Thyroid gland (tissue), 4 donors: ENCODE measurements at regions of chr20 and their contacts with region 1.

Region 1: GRCh38 chr20:31822421-31823330 is 3.5 kb downstream of the MYLK2 start:
- DNase-seq: peak; percentile 98
- H3K4me3 ChIP-seq: no peak overlapping the region
- H3K27ac ChIP-seq: peak overlapping the region; percentile 17 to 64 (median 56)
- H3K4me1 ChIP-seq: peaks cover 28 to 38% of the 10 kb centered on the region in 2 donors
- H3K27me3 ChIP-seq: no peaks in the 10 kb centered on the region
- CTCF ChIP-seq: peak; percentile 98 to 99 (median 98)
- POLR2A ChIP-seq: no peak

Region 2: DNA sequence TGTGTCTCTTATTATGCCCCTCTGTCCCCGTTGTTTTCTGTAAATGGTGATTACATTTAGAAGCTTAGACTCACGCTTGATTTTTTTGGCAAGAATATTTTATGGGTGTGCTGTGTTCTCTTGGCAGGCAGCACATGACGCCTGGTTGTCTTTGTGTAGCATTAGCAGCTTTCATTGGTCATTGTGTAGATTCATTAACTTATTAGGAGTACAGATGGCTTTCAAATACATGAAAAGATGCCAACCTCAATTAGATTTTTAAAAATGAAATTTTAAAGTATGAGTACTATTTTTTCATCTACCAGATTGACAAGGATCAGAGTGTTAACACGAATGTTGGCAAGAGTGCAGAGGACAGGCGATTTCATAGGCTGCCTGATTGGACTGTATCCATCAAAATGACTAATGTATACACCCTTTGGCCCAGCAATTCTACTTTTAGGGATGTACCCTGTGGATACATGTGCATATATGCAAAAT is 169.7 kb before region 1 on chr20:
- intact Hi-C with region 1: loop called (anchors 10 kb)
- DNase-seq: no peak
- H3K4me3 ChIP-seq: no peak overlapping the region
- H3K27ac ChIP-seq: no peak overlapping the region
- H3K4me1 ChIP-seq: peaks cover 0 to 6% of the 10 kb centered on the region in 2 donors
- H3K27me3 ChIP-seq: no peaks in the 10 kb centered on the region
- CTCF ChIP-seq: no peak
- POLR2A ChIP-seq: no peak

Region 3: DNA sequence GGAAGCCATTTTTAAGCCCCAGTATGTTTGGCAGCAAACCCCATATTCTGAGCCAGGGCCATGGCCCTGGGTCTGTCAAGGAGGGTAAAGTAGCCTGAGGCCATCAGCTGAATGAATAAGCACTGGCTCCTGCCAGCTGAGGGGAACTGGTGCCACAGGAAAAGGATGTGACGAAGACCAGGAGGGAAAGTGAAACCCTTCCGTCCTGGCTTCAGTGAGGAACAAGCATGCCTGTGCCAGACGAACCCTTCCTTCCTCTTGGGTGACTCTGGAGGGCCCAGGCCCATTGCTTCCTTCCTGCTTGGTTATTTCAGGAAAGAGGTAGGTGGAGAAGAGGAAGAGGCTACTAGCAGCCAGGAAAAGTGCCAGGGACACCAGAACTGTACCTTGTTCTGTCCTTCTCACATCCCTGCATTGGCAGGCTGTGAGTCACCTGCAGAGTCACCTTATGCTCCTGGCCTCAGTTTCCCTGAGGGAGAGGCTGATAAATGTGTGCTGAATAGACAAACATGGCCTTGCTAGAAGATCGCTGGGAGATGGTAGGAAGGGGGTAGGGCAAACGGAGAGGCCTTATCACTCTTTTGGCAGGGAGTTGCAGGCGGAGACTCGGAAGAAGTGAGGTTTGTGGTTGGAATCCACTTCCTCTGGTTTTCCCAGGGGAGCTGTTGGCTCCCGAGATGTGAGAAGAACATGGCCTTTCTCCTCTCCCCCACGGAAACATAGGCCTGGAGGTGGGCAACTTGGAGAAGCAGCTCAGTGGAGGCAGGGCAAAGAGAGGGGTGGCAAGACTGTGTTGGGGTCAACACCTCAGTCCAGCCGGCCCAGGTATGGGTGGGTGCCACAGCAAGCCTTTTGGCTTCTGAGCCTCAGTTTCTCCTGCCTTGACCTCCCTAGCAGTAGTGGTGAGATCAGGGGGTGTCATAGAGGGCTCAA is 147.5 kb before region 1 on chr20:
- intact Hi-C with region 1: no loop called
- DNase-seq: peak; percentile 68 to 75
- H3K4me3 ChIP-seq: no peak overlapping the region
- H3K27ac ChIP-seq: peak overlapping the region; percentile 79 to 90 (median 80)
- H3K4me1 ChIP-seq: peaks cover 79 to 96% of the 10 kb centered on the region in 2 donors
- H3K27me3 ChIP-seq: no peaks in the 10 kb centered on the region
- CTCF ChIP-seq: no peak
- POLR2A ChIP-seq: no peak

Region 4: GRCh38 chr20:31788578-31788977 is 34.1 kb before region 1 on chr20:
- intact Hi-C with region 1: no loop called
- DNase-seq: no peak
- H3K4me3 ChIP-seq: no peak overlapping the region
- H3K27ac ChIP-seq: no peak overlapping the region
- H3K4me1 ChIP-seq: no peaks in the 10 kb centered on the region
- H3K27me3 ChIP-seq: no peaks in the 10 kb centered on the region
- CTCF ChIP-seq: no peak
- POLR2A ChIP-seq: no peak

Region 5: GRCh38 chr20:32031007-32031958 is 208.6 kb after region 1 on chr20:
- intact Hi-C with region 1: loop called (anchors 10 kb)
- DNase-seq: peak; percentile 80 to 84
- H3K4me3 ChIP-seq: no peak overlapping the region
- H3K27ac ChIP-seq: no peak overlapping the region
- H3K4me1 ChIP-seq: peaks cover 5% of the 10 kb centered on the region in 2 donors
- H3K27me3 ChIP-seq: no peaks in the 10 kb centered on the region
- CTCF ChIP-seq: peak; percentile 78 to 87 (median 84)
- POLR2A ChIP-seq: no peak

Region 6: GRCh38 chr20:32091888-32092346 is 269.2 kb after region 1 on chr20:
- intact Hi-C with region 1: loop called (anchors 10 kb)
- DNase-seq: peak; percentile 80 to 82
- H3K4me3 ChIP-seq: no peak overlapping the region
- H3K27ac ChIP-seq: no peak overlapping the region
- H3K4me1 ChIP-seq: no peaks in the 10 kb centered on the region
- H3K27me3 ChIP-seq: no peaks in the 10 kb centered on the region
- CTCF ChIP-seq: peak; percentile 60 to 93 (median 77)
- POLR2A ChIP-seq: no peak